Posterior cingulate gyrus (tissue), 11 donors: ENCODE measurements at regions of chr7 and their contacts with region 1.

Region 1: DNA sequence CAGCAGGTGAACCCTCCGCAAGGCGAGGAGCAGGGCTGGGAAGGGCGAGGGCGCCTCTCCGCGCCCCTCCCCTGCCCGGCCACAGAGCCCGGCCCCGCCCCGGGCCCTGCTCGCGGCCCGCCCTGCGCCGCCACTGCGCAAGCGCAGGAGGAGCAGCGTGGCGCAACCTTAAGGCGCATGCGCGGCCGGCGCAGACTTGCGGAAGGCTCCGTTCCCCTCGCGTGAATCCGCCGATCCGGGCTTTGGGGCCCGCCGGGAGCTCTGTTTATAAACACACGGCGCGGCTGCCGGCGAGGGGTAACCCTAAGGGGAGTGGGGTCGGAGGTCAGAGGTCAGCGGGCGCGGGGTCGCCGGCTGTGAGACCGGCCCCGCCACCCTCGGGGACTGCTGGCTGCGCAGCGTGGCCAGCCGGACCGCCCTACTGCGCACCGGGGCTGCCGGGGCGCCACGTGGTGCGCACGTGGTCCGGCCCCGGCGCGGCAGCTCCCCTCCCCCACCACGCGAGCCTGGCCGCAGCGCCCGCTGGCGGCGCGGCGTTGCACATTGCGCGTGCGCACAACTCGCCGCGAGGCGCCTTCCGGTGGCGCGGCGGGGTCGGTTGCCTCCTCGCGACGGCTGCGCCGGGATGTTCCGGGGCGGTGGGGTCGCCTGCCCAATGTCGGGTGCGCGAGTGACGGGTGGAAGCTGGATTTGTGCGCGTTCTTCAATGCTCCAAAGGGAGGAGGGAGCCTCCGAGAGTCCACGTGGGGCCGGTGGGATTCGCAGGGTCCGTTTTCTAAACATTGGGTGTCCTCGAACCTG is 40.2 kb upstream of the FOXK1 start:
- DNase-seq: peak; percentile 76 to 97 (median 84)

Region 2: DNA sequence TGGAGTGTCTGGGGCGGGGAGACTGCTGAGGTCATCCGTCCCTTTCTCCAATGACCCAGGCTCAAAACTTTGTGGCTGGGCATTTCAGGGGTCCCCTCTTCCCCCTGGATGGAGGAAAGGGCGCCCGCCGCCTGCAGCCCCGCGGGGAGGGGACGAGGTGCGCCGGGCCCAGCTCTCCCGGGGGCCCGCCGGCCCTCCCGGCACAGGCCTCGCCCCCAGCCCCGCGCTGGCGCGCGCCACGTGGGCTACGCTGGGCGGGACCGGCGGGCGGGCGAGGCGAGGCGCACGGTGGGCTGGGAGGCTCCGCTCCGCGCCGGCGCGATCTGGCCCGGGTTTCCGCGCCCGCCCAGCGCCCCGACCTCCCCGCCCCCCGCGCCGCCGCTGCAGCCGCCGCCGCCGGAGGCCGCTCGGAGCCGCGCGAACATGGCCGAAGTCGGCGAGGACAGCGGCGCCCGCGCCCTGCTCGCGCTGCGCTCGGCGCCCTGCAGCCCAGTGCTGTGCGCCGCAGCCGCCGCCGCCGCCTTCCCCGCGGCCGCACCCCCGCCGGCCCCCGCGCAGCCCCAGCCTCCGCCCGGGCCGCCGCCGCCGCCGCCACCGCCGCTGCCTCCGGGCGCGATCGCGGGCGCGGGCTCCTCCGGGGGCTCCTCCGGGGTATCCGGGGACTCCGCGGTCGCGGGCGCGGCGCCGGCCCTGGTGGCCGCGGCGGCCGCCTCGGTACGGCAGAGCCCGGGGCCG is 40.2 kb after region 1 on chr7 and contains the start of gene FOXK1:
- intact Hi-C with region 1: loop called (anchors 1 kb)
- DNase-seq: peak; percentile 53 to 97 (median 74)

Region 3: GRCh38 chr7:4738711-4739527 is 97.1 kb after region 1 on chr7:
- intact Hi-C with region 1: loop called (anchors 5 kb)
- DNase-seq: peak in 1 of 10 donors; percentile 35

Region 4: GRCh38 chr7:4753711-4754432 is 112.0 kb after region 1 on chr7:
- intact Hi-C with region 1: loop called (anchors 5 kb)
- DNase-seq: peak; percentile 69 to 97 (median 85)

Region 5: GRCh38 chr7:4775250-4775847 is 133.5 kb after region 1 on chr7 and contains the start of gene AP5Z1:
- intact Hi-C with region 1: loop called (anchors 1 kb)
- DNase-seq: peak; percentile 96 to 100 (median 98)